Activated naive CD8-positive, alpha-beta T cell treated with anti-CD3 and anti-CD28 coated beads, Interleukin-2, amount 10 ng/mL, durations not matched to agents 7 days and 5 days (primary cell): ENCODE measurements at regions of chr11 and their contacts with region 1.

Region 1: DNA sequence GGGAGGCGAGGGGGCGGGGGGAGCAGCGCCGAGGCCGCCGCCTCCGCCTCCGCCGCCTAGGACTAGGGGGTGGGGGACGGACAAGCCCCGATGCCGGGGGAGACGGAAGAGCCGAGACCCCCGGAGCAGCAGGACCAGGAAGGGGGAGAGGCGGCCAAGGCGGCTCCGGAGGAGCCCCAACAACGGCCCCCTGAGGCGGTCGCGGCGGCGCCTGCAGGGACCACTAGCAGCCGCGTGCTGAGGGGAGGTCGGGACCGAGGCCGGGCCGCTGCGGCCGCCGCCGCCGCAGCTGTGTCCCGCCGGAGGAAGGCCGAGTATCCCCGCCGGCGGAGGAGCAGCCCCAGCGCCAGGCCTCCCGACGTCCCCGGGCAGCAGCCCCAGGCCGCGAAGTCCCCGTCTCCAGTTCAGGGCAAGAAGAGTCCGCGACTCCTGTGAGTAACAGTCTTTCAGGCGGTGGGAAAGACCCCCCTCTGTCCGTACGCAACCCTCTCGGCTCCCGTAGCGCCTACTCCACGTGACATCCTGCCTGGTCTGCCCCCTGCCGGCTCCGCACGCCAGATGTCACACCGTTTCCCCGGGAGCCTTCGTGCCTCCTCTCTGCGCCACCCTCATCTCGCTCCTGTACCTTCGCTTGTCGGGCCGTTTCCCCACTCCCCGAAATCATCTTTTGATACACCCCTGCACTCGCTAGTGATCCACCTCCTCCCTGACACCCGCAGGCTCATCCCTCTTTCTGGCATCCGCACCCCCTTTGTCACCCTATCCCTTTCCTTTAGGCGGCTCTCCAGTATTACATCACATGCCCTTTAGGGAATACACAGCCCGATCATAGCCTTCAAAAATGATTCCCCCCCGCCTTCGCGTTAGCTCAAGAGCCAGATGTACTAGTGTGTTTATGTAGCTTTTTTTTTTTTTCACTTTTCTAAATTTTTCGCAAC is 598 bp downstream of the ZFP91 start:
- DNase-seq: peak; percentile 91
- ATAC-seq: peak; percentile 41
- H3K4me3 Mint-ChIP-seq: peak overlapping the region; percentile 96
- H3K27ac Mint-ChIP-seq: peak overlapping the region; percentile 97
- H3K4me1 Mint-ChIP-seq: peaks cover 45% of the 10 kb centered on the region
- H3K27me3 Mint-ChIP-seq: no peaks in the 10 kb centered on the region

Region 2: DNA sequence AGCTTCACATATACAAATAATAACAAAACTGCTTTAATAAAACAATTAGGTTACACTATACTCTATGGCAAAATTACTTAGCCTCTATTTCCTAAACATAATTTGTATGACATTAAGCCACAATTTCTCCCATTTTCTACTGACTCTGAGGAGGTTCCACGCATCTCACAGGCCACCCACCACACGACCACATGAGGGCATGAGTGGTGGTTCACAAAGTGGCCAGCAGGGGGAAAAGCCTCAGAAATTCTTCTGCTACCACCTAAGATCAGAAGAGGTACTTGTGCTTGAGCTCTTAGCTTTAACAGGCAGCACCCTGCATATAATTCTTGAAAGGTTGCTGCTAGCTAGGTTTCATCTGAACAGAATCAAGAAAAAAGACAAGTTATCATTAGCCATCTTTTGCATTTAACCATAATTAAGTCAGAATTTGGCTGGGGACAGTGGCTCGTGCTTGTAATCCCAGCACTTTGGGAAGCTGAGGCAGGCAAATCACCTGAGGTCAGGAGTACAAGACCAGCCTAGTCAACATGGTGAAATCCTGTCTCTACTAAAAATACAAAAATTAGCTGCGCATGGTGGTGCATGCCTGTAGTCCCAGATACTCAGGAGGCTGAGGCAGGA is 11.5 kb before region 1 on chr11:
- POLR2A ChIA-PET with region 1: interaction called, 29 read pairs
- DNase-seq: peak; percentile 72
- ATAC-seq: peak; percentile 90
- H3K4me3 Mint-ChIP-seq: peak overlapping the region; percentile 70
- H3K27ac Mint-ChIP-seq: peak overlapping the region; percentile 88
- H3K4me1 Mint-ChIP-seq: peaks cover 53% of the 10 kb centered on the region
- H3K27me3 Mint-ChIP-seq: no peaks in the 10 kb centered on the region

Region 3: DNA sequence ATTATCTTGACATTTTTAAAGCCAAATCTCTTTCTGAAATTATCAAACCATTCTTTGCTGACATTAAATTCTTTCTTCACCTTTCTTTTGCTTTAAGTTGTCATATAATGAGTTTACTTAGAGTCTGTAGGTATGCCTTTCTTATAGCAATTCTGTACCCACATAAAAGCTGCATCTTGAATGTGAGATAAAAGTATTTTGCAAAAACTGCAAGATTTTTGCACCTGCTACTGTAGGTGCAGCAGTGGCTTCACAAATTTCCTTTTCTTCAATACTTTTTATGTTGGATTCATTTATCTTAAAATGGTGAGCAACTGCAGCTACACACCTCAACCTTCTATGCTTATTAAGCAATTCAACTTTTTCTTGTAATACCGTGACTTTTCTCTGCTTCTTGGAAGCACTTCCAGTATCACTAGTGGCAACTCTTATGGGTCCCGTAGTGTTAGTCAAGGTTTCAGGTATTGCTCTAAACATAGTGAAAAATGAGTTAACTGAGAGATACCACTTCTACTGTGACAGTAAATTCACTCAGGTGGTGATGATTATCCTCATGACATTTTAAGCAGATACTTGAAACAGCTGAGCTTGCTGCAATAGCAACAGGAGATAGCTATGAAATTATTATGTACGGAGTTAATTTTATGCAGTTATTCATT is 18.2 kb after region 1 on chr11:
- POLR2A ChIA-PET with region 1: no interaction called
- DNase-seq: no peak
- ATAC-seq: no peak
- H3K4me3 Mint-ChIP-seq: peak overlapping the region; percentile 25
- H3K27ac Mint-ChIP-seq: peak overlapping the region; percentile 19
- H3K4me1 Mint-ChIP-seq: peaks cover 42% of the 10 kb centered on the region
- H3K27me3 Mint-ChIP-seq: no peaks in the 10 kb centered on the region